CD14-positive monocyte (primary cell): ENCODE measurements at regions of chr1 and their contacts with region 1.

Region 1: GRCh38 chr1:235075188-235075926 is 53.3 kb downstream of the TOMM20 start:
- DNase-seq: peak; percentile 66 to 70 (median 67)
- H3K4me3 ChIP-seq: no peak overlapping the region
- H3K4me3 Mint-ChIP-seq: peak overlapping the region in 1 of 2 donors; percentile 48
- H3K27ac ChIP-seq: peak overlapping the region in 1 of 2 donors; percentile 80
- H3K27ac Mint-ChIP-seq: peak overlapping the region; percentile 73 to 95 (median 91)
- H3K4me1 ChIP-seq: peaks cover 64 to 77% of the 10 kb centered on the region in 2 donors
- H3K4me1 Mint-ChIP-seq: peaks cover 39% of the 10 kb centered on the region
- H3K27me3 ChIP-seq: no peaks in the 10 kb centered on the region
- H3K27me3 Mint-ChIP-seq: peaks cover 0 to 2% (median 0%) of the 10 kb centered on the region in 3 donors
- CTCF ChIP-seq: no peak

Region 2: DNA sequence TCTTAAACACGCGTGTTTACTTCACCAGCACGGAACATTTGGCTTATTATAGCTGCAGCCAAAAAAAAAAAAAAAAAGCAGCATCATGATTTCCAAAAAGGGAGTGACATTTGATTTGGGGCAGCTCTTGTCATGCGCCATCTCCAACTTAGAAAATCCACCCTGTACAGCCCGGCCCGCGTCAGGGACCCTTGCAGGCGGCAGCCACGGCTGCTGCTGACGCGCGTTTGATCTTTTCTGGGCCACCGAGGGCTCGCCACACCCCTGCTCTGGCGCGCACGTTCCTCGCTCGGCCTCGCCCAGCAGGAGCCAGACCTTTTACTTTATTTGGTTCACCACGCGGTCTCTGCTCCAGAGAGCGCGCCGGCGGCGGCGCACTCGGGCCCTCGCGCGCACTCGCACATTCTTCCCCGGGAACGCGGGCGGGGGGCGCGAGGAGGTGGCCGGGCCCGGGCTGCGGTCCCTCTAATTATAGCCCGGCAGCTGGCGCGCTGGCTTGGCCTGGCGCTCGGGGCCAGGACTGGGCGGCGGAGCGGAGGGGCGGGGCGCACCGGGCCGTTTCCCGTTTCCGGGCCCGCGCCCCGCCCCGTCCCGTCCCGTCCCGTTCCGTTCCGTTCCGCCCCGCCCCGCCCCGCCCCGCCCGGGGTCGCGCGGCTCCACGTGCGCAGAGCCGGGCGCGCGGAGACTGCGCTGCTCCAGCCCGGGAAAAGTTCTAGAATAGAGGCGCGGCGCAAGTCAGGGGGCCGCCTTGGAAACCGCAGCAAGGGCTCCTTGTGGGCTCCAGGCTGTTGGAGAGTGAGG is 475.5 kb before region 1 on chr1:
- intact Hi-C with region 1: loop called in 1 of 2 experiments (anchors 5 kb)
- DNase-seq: peak; percentile 61 to 70 (median 65)
- H3K4me3 ChIP-seq: peak overlapping the region; percentile 46 to 95 (median 52)
- H3K4me3 Mint-ChIP-seq: peak overlapping the region; percentile 88 to 100
- H3K27ac ChIP-seq: peak overlapping the region; percentile 81 to 89
- H3K27ac Mint-ChIP-seq: peak overlapping the region; percentile 93 to 100 (median 93)
- H3K4me1 ChIP-seq: peaks cover 57 to 66% of the 10 kb centered on the region in 2 donors
- H3K4me1 Mint-ChIP-seq: peaks cover 42% of the 10 kb centered on the region
- H3K27me3 ChIP-seq: no peaks in the 10 kb centered on the region
- H3K27me3 Mint-ChIP-seq: peaks cover 0 to 2% (median 0%) of the 10 kb centered on the region in 3 donors
- CTCF ChIP-seq: no peak

Region 3: DNA sequence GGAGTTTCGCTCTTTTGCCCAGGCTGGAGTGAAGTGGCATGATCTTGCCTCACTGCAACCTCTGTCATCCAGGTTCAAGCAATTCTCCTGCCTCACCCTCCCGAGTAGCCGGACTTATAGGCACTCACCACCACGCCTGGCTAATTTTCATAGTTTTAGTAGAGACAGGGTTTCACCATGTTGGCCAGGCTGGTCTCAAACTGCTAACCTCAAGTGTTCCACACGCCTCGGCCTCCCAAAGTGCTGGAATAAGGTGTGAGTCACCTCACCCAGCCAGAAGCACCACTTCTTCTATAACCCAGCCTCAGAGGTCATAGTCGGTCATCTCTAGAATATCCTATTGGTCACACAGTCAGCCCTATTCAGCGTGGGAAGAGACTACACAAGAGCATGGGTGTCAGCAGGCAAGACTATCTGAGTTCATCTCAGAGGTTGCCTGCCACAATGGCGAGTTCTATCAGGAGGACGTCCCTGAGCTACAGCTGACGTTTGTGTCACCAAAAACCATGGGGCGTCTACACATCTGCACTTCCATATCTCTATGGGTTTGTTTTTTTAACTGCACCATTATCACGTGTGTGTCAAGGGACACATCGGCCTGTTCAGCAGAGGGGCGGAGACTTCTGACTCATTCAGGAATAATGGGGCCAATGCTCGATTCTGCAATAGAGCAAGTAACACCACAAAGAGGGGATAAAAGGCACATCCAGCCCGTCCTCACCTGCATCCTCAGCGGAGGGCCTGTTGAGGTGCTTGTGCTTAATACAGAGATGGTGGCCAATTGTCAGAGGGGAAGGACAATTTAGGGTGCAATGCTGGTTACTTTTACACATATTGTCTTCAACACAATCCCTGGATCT is 209.1 kb before region 1 on chr1:
- intact Hi-C with region 1: loop called in 1 of 2 experiments (anchors 5 kb)
- DNase-seq: peak; percentile 95
- H3K4me3 ChIP-seq: no peak overlapping the region
- H3K4me3 Mint-ChIP-seq: peak overlapping the region; percentile 46 to 47
- H3K27ac ChIP-seq: peak overlapping the region; percentile 61 to 85
- H3K27ac Mint-ChIP-seq: peak overlapping the region; percentile 90 to 97 (median 92)
- H3K4me1 ChIP-seq: peaks cover 41 to 53% of the 10 kb centered on the region in 2 donors
- H3K4me1 Mint-ChIP-seq: peaks cover 54% of the 10 kb centered on the region
- H3K27me3 ChIP-seq: no peaks in the 10 kb centered on the region
- H3K27me3 Mint-ChIP-seq: peaks cover 0 to 6% (median 2%) of the 10 kb centered on the region in 3 donors
- CTCF ChIP-seq: no peak

Region 4: GRCh38 chr1:235011599-235012435 is 63.5 kb before region 1 on chr1:
- intact Hi-C with region 1: loop called in 1 of 2 experiments (anchors 5 kb)
- DNase-seq: peak; percentile 98 to 100 (median 99)
- H3K4me3 ChIP-seq: peak overlapping the region in 1 of 3 experiments; percentile 38
- H3K4me3 Mint-ChIP-seq: peak overlapping the region; percentile 62 to 81
- H3K27ac ChIP-seq: peak overlapping the region; percentile 76 to 88
- H3K27ac Mint-ChIP-seq: peak overlapping the region; percentile 94 to 98 (median 96)
- H3K4me1 ChIP-seq: peaks cover 28 to 32% of the 10 kb centered on the region in 2 donors
- H3K4me1 Mint-ChIP-seq: peaks cover 60% of the 10 kb centered on the region
- H3K27me3 ChIP-seq: no peaks in the 10 kb centered on the region
- H3K27me3 Mint-ChIP-seq: peaks cover 0 to 2% (median 0%) of the 10 kb centered on the region in 3 donors
- CTCF ChIP-seq: no peak

Region 5: GRCh38 chr1:235181561-235182245 is 106.3 kb after region 1 on chr1:
- intact Hi-C with region 1: no loop called
- DNase-seq: no peak
- H3K4me3 ChIP-seq: no peak overlapping the region
- H3K4me3 Mint-ChIP-seq: no peak overlapping the region
- H3K27ac ChIP-seq: no peak overlapping the region
- H3K27ac Mint-ChIP-seq: peak overlapping the region in 3 of 7 donors; percentile 3 to 50 (median 4)
- H3K4me1 ChIP-seq: no peaks in the 10 kb centered on the region
- H3K4me1 Mint-ChIP-seq: no peaks in the 10 kb centered on the region
- H3K27me3 ChIP-seq: no peaks in the 10 kb centered on the region
- H3K27me3 Mint-ChIP-seq: peaks cover 0 to 2% (median 0%) of the 10 kb centered on the region in 3 donors
- CTCF ChIP-seq: no peak